Activated T-helper 1 cell treated with anti-CD3 and anti-CD28 coated beads, Interleukin-12 subunit alpha, Interleukin-12 subunit beta, Interleukin-2, Interleukin-4 antibody, amounts not matched to agents 30 ng/mL and 10 ng/mL and 1 ng/mL, durations not matched to agents 14 hours and 24 hours and 36 hours (primary cell): ENCODE measurements at regions of chrX and their contacts with region 1.

Region 1: GRCh38 chrX:39427906-39428305 is 626.6 kb downstream of the MID1IP1 start:
- DNase-seq: no peak
- H3K4me3 Mint-ChIP-seq: no peak overlapping the region
- H3K27ac Mint-ChIP-seq: peak overlapping the region; percentile 98
- H3K4me1 Mint-ChIP-seq: peaks cover 58% of the 10 kb centered on the region
- H3K27me3 Mint-ChIP-seq: no peaks in the 10 kb centered on the region

Region 2: GRCh38 chrX:38803586-38804431 is 624.1 kb before region 1 on chrX:
- intact Hi-C with region 1: loop called (anchors 10 kb)
- DNase-seq: peak; percentile 69
- H3K4me3 Mint-ChIP-seq: peak overlapping the region; percentile 89
- H3K27ac Mint-ChIP-seq: peak overlapping the region; percentile 91
- H3K4me1 Mint-ChIP-seq: peaks cover 15% of the 10 kb centered on the region
- H3K27me3 Mint-ChIP-seq: no peaks in the 10 kb centered on the region

Region 3: DNA sequence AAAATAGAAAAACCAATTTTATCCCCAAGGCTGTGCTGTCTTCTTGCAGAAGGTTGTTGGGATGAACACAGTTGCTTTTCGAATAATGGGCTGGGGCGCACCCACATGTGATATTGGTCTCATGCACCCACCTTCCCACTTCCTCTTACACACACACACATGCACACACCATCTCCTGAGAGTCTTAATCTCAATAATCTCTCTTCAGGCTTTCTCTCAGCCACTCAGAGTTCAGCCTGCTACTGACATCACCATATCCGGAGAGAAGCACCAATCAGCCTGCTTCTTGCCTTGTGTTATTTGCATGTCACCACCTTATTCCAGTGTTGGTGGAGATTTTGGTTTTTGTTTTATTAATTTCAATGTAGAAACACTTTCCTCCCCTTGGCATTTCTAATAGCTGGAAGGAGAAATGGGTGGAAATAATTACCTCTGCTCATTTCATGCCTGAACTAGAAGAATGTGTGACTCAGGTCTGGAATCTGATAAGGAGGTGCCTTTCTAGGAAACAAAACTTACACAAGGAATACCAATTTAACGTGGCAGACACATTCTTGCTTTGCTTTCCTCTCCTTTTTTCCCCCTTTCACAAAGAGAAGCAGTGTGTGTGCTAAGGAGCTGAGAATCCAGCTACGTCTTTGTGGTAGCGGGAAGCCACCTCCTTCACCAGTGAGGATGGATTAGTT is 226.5 kb before region 1 on chrX:
- intact Hi-C with region 1: loop called (anchors 1 kb)
- DNase-seq: no peak
- H3K4me3 Mint-ChIP-seq: no peak overlapping the region
- H3K27ac Mint-ChIP-seq: peak overlapping the region; percentile 79
- H3K4me1 Mint-ChIP-seq: peaks cover 82% of the 10 kb centered on the region
- H3K27me3 Mint-ChIP-seq: no peaks in the 10 kb centered on the region

Region 4: DNA sequence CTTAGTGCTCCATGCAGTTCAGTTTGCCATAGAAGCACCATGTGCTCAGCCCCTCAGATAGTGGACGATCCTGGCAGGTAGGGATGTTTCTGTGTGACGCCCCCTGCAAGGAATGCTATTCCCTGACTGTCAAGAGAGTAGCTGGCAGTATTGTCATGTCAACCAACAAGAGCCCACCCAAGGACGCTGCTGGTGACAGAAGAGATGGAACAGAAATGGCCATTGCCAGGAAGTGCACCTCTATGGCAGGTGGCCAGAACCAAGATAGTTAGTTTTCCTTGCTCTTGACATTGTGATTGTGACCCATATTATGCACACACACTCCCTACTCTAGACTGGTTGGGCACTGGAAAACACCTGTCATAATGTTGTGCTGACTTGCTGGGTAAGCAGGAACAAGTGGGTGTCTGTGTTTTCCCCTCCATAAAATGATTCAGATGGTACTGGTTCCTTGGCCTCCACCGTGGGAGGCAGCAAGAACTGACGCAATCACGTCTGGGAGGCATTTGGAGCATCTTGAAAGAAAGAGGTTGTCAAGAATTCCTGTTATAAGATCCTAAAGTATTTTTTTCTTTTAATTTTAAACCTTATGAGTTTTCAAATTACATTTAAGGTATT is 118.8 kb before region 1 on chrX:
- intact Hi-C with region 1: loop called (anchors 1 kb)
- DNase-seq: peak; percentile 3
- H3K4me3 Mint-ChIP-seq: peak overlapping the region; percentile 58
- H3K27ac Mint-ChIP-seq: peak overlapping the region; percentile 100
- H3K4me1 Mint-ChIP-seq: peaks cover 67% of the 10 kb centered on the region
- H3K27me3 Mint-ChIP-seq: no peaks in the 10 kb centered on the region

Region 5: DNA sequence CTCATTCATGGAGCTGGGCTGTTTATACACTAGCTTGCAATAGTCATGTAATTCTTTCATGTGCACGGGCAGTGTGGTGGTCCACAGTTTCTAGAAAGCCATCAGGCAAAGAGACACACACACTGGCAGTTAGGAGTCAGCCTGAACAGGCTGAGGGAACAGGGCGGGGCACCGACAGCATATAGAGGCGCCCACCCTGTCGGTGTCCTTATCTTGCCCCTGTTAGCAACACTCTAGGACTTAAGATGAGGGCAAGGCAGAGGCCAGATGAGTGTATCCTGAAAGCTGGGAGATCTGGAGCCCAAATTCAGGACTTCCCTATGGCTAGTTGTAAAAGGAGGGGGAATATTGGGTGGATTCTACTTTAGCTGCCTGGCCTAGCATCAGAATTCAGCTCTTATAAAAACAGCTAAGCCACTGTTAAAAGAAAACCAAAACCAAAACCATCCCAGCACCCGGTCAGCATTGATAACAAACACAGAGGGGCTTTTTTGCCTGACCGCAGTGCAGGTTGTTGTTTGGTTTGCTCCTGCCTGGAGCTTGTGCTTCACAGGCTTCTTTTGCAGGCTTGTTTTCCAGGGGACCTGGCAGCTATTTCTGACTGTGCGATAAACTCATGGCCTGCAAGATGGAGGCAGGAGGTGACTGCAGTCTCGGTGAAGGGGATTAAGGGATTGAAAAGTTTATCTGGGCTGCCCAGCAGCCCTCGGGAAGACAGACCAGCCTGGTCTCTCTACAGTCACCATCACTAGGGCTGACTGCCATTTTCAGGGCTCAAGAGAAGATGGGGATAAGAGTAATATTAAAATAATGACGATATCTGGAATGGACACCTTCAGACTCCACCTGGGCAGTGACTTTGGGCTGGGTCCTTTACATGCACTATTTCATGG is 12.2 kb after region 1 on chrX:
- intact Hi-C with region 1: loop called (anchors 1 kb)
- DNase-seq: peak; percentile 8
- H3K4me3 Mint-ChIP-seq: no peak overlapping the region
- H3K27ac Mint-ChIP-seq: peak overlapping the region; percentile 91
- H3K4me1 Mint-ChIP-seq: peaks cover 44% of the 10 kb centered on the region
- H3K27me3 Mint-ChIP-seq: no peaks in the 10 kb centered on the region

Region 6: GRCh38 chrX:39578354-39578869 is 150.5 kb after region 1 on chrX:
- intact Hi-C with region 1: loop called (anchors 10 kb)
- DNase-seq: peak; percentile 16
- H3K4me3 Mint-ChIP-seq: peak overlapping the region; percentile 59
- H3K27ac Mint-ChIP-seq: peak overlapping the region; percentile 82
- H3K4me1 Mint-ChIP-seq: peaks cover 28% of the 10 kb centered on the region
- H3K27me3 Mint-ChIP-seq: no peaks in the 10 kb centered on the region

Region 7: DNA sequence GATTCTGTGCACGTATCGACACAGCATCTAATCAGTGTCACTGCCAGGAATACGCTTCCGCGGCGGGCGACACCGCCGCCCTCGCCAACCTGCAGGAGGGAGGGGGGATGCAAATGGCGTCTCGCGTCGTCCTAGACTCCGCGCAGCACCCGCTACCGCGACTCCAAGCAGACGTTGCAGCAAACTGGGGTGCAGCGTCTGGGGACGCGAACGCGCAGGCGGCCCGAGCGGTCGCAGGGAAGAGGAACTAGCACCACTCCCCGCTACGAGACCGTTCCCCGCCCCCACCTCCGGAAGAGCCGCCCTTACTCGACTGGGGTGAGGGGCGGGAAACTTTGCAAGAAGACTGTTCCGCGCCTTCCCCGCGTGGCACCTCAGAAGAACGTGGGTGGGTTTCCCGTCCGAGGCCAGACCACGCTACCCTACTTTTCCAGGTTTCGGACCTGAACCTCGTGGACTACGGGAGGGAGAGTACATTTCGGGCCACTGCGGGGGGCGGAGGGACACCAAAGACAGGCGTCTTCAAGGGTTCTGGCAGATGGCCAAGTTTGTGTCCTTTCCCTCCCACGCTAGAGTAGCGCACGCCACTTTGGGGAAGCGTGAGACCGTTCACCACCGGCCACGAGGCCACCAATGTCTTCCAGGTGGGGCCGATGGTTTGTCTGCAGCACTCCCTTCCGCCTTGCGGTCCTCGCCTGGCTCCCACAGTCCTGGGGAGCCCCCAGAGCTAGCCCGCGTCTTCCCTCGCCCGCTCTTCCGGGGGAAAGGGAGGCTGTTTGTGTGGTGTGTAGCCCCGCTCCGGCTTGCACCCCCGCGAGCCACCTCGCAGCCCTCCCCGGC is 747.8 kb after region 1 on chrX:
- intact Hi-C with region 1: loop called (anchors 5 kb)
- DNase-seq: peak; percentile 61
- H3K4me3 Mint-ChIP-seq: peak overlapping the region; percentile 82
- H3K27ac Mint-ChIP-seq: peak overlapping the region; percentile 99
- H3K4me1 Mint-ChIP-seq: peaks cover 37% of the 10 kb centered on the region
- H3K27me3 Mint-ChIP-seq: no peaks in the 10 kb centered on the region